ENCODE measurements at regions of chr2 and their contacts with region 1.

Region 1: GRCh38 chr2:120223034-120223912 is at the start of gene TMEM185B:
- DNase-seq: peak; percentile 95
- H3K4me3 Mint-ChIP-seq: peak within 1 kb of the TSS; percentile 81
- H3K27ac Mint-ChIP-seq: peak within 1 kb of the TSS; percentile 83
- H3K4me1 Mint-ChIP-seq: peaks cover 52% of the 10 kb centered on the region
- H3K27me3 Mint-ChIP-seq: no peaks in the 10 kb centered on the region
- total RNA-seq, gene TMEM185B: 19.4 to 19.7 TPM

Region 2: DNA sequence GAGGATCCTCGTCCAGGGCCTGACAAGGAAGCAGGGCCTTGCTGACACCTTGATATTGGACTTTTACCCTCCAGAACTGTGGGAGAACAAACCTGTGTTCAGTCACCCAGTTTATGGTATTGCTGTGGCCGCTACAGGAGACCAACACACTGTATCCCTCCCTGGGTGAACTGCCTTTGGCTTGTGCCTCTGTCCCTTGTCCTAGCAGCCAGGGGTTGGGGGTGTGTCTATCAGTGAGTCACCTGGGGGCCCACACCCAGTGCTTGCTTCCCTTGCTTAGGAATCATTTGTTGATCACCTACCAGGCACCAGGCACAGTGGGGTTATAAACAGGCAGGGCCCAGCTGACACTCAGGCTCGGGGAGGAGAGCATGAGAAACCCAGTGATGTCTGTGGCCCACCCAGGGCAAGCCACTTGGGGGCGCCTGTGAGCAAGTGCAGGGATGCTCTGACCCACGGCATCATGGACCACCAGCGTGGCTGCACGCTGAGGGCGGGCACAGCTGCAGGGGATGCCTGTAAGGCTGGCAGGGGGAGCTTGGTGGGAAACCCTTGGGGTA is 17.2 kb before region 1 on chr2:
- CTCF ChIA-PET with region 1: interaction called, 14 read pairs
- POLR2A ChIA-PET with region 1: no interaction called
- intact Hi-C with region 1: no loop called
- DNase-seq: peak; percentile 66
- H3K4me3 Mint-ChIP-seq: no peak overlapping the region
- H3K27ac Mint-ChIP-seq: no peak overlapping the region
- H3K4me1 Mint-ChIP-seq: no peaks in the 10 kb centered on the region
- H3K27me3 Mint-ChIP-seq: no peaks in the 10 kb centered on the region

Region 3: DNA sequence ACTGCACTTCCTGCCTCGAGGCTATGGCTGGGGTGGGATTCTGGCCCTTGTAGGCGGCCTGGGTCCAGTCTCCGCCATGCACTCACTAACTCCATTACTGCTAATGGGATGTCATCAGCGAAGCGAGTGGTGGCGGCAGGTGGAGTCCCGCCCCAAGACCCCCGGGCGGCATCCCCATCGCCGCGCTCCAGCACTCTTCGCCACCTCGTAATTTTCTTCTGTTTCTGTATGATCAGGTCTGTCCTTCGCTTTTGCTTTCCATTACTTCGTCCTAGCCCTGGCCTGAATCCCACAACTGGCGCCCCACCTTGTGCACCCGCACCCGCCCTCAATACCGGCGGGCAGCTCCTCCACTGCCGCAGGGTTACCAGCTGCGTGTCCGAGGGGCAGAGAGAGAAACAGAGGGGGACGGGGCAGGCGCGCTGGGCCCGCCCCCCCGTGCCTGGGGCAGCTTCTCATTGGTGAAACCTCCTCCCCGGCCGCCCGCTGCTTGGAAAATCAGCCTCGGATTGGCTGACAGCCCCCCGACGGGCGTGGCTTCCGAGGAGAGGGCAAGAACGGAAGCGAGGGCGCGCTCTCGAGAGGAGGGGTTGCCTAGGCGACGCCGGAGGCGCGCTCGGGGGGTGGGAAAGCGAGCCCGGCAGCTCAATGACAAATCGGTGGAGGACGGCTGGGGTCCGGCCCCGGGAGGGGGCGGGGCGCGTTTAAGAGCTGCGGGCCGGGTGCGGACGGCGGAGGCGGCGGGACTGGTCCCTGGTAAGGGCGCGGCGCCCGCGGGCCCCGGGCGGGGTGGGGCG is 29.1 kb after region 1 on chr2 and contains the start of gene RALB:
- CTCF ChIA-PET with region 1: interaction called, 6 read pairs
- POLR2A ChIA-PET with region 1: interaction called, 4 read pairs
- intact Hi-C with region 1: loop called (anchors 1 kb)
- DNase-seq: peak; percentile 99
- H3K4me3 Mint-ChIP-seq: peak within 1 kb of the TSS; percentile 98
- H3K27ac Mint-ChIP-seq: peak within 1 kb of the TSS; percentile 83
- H3K4me1 Mint-ChIP-seq: peaks cover 43% of the 10 kb centered on the region
- H3K27me3 Mint-ChIP-seq: peaks cover 7% of the 10 kb centered on the region
- total RNA-seq, gene RALB: 52.5 to 52.9 TPM

Measured in activated CD4-positive, alpha-beta memory T cell treated with anti-CD3 and anti-CD28 coated beads for 36 hours (primary cell).